ENCODE measurements at regions of chr5 and their contacts with region 1.

Region 1: GRCh38 chr5:150458819-150459557 is 9.4 kb upstream of the RPS14 start:
- DNase-seq: peak; percentile 74 to 84 (median 80)
- ATAC-seq: peak; percentile 94
- H3K4me3 ChIP-seq: no peak overlapping the region
- H3K27ac ChIP-seq: no peak overlapping the region
- H3K4me1 ChIP-seq: peaks cover 3% of the 10 kb centered on the region
- H3K27me3 ChIP-seq: no peaks in the 10 kb centered on the region
- CTCF ChIP-seq: peak; percentile 82 to 92 (median 89)
- POLR2A ChIP-seq: no peak

Region 2: GRCh38 chr5:150523472-150524350 is 64.7 kb after region 1 on chr5:
- intact Hi-C with region 1: loop called (anchors 2 kb)
- DNase-seq: peak; percentile 49 to 68 (median 58)
- ATAC-seq: peak; percentile 54
- H3K4me3 ChIP-seq: no peak overlapping the region
- H3K27ac ChIP-seq: peak overlapping the region in 3 of 4 donors; percentile 26 to 78 (median 76)
- H3K4me1 ChIP-seq: peaks cover 86% of the 10 kb centered on the region
- H3K27me3 ChIP-seq: no peaks in the 10 kb centered on the region
- CTCF ChIP-seq: peak; percentile 14 to 70 (median 66)
- POLR2A ChIP-seq: no peak

Region 3: DNA sequence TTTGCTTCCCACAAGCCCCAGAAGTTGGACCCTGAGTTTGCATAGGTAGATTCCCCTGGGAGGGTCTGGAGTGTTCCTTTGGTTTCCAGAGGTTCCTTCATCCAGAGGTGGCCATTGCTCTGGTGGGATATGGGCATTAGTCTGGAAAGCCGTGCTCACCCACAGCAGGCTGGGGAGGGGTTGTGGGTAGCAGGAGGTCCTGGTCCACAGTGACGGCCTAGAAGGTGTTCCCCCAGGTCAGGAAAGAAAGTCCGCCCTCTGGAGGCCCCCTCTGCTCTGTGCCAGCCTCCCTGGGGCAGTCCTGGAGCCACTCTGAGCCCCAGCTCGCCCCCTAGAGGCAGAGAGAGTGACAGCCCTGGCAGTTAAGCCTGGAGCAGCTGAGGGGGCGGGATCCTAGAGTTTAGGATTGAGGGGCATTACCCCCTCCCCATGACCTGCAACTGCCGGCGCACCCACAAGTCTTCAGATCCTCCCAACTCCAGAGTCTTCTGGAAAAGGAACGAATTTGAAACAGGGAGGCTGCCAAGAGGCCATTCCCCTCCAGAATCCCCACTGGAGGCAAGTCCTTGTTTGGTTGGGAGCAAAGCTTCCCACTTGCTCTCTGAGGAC is 85.7 kb after region 1 on chr5:
- intact Hi-C with region 1: loop called (anchors 5 kb)
- DNase-seq: peak; percentile 79 to 89 (median 82)
- ATAC-seq: peak; percentile 79
- H3K4me3 ChIP-seq: no peak overlapping the region
- H3K27ac ChIP-seq: no peak overlapping the region
- H3K4me1 ChIP-seq: no peaks in the 10 kb centered on the region
- H3K27me3 ChIP-seq: no peaks in the 10 kb centered on the region
- CTCF ChIP-seq: peak; percentile 84 to 95 (median 93)
- POLR2A ChIP-seq: no peak

Region 4: DNA sequence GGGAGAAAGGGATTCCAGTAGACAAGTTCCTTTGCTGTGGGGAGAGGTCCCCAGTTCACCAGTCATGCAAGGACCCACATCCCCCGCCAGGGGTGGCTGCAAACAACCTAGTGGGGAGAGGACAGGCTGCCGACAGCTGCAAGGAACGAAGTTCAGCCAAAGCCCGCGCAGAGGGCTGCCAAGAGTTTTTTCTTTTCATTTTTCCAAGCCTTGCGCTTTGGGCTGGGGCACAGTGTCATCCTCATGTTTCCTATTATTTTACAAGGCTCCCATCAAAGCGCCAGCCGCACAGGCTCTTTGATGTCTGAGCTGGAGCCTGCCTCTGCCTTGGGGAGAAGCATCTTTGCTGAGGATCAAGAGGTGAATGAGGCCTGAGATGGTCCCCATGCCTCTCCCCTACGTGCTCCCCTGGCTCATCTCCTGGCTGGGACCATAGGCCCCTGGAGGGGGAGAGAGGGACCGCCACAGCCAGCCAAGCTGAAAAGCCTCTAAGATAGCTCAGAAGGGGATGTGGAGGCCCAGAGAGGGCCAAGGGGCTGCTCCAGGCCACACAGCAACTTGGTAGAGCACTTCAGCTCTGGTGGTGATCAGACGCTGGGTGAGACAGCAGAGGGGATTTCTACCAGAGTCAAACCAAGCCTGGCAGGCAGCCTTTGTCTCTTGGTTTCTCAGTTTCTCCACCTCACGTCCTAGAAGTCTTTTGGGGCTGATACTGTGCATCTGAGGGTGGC is 131.0 kb after region 1 on chr5:
- intact Hi-C with region 1: no loop called
- DNase-seq: peak; percentile 64 to 79 (median 70)
- ATAC-seq: peak; percentile 72
- H3K4me3 ChIP-seq: no peak overlapping the region
- H3K27ac ChIP-seq: peak overlapping the region in 2 of 4 donors; percentile 23 to 34
- H3K4me1 ChIP-seq: peaks cover 35% of the 10 kb centered on the region
- H3K27me3 ChIP-seq: no peaks in the 10 kb centered on the region
- CTCF ChIP-seq: peak; percentile 42 to 83 (median 49)
- POLR2A ChIP-seq: no peak